ENCODE measurements at regions of chr3 and their contacts with region 1.

Region 1: GRCh38 chr3:194486540-194487288 is at the start of gene ATP13A3:
- DNase-seq: peak; percentile 96
- H3K4me3 Mint-ChIP-seq: peak within 1 kb of the TSS; percentile 94
- H3K27ac Mint-ChIP-seq: peak within 1 kb of the TSS; percentile 97
- H3K4me1 Mint-ChIP-seq: peaks cover 53% of the 10 kb centered on the region
- H3K27me3 Mint-ChIP-seq: no peaks in the 10 kb centered on the region
- total RNA-seq, gene ATP13A3: 181 and 193 TPM in 2 replicates

Region 2: GRCh38 chr3:193951859-193952258 is 534.9 kb before region 1 on chr3:
- intact Hi-C with region 1: no loop called
- DNase-seq: no peak
- H3K4me3 Mint-ChIP-seq: no peak overlapping the region
- H3K27ac Mint-ChIP-seq: no peak overlapping the region
- H3K4me1 Mint-ChIP-seq: no peaks in the 10 kb centered on the region
- H3K27me3 Mint-ChIP-seq: peaks cover 44% of the 10 kb centered on the region

Region 3: GRCh38 chr3:194431553-194431952 is 55.2 kb before region 1 on chr3:
- intact Hi-C with region 1: no loop called
- DNase-seq: no peak
- H3K4me3 Mint-ChIP-seq: no peak overlapping the region
- H3K27ac Mint-ChIP-seq: no peak overlapping the region
- H3K4me1 Mint-ChIP-seq: peaks cover 3% of the 10 kb centered on the region
- H3K27me3 Mint-ChIP-seq: no peaks in the 10 kb centered on the region

Region 4: DNA sequence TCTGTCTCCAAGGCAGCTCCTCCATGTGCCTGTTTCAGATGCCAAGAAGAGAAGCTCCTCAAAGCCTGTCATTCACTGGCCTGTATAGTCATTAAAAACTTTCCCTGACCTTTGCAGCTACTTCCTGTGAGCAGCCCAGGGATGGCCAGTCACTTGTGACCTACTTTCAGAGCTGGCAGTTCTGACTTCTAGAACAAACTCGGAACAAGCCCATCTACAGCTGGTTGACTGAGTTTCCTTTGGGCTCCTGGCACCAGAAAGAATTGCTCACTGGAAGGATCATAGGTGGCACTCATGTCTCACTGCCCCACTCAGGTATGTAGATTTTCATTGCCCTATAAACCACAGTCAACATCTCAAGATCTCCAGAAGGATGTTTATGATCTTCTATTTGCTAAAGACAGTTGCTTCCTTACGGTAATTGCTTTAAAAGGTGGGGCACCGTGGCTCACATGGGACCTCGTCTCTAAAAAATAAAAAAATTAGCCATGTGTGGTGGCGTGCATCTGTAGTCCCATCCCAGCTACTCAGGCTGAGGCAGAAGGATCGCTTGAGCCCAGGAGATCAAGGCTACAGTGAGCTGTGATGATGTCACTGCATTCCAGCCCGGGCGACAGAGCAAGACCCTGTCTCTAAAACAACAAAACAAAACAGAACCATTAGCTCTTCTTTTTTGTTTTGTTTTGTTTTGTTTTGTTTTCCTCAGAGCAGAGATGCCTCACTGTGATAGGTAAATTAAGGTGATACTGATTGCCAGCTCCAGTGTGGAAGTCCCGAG is 11.3 kb after region 1 on chr3:
- intact Hi-C with region 1: no loop called
- DNase-seq: no peak
- H3K4me3 Mint-ChIP-seq: no peak overlapping the region
- H3K27ac Mint-ChIP-seq: no peak overlapping the region
- H3K4me1 Mint-ChIP-seq: peaks cover 8% of the 10 kb centered on the region
- H3K27me3 Mint-ChIP-seq: no peaks in the 10 kb centered on the region

Region 5: DNA sequence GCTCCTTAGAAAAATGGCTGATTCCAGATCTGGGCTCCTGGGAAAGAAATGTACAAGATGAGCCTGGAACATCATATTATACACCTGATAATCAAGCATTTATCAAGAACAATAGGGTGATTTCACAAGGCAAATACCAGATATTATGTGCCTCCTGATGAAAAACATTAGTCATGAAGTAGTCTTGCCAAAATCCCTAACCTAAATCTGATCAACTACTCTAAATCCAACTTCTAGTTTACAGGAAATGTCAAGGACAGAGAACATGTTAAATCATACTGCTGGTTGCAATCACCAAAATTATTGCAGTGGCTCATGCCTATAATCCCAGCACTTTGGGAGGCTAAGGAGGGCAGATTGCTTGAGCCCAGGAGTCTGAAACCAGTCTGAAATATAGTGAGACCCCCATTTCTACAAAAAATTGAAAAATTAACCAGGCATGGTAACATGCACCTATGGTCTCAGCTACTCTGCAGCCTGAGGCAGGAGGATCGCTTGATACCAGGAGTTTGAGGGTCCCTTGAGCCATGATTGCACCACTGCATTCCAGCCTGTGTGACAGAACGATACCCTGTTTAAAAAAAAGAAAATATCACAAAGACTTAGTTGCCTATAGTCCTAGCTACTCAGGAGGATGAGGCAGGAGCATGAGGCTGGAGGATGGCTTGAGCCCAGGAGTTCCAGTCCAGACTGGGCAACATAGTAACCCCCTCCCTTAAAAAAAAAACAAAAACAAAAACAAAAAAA is 35.0 kb after region 1 on chr3:
- intact Hi-C with region 1: loop called (anchors 1 kb)
- DNase-seq: no peak
- H3K4me3 Mint-ChIP-seq: no peak overlapping the region
- H3K27ac Mint-ChIP-seq: no peak overlapping the region
- H3K4me1 Mint-ChIP-seq: peaks cover 25% of the 10 kb centered on the region
- H3K27me3 Mint-ChIP-seq: peaks cover 14% of the 10 kb centered on the region

Region 6: GRCh38 chr3:194583604-194584318 is 97.0 kb after region 1 on chr3:
- intact Hi-C with region 1: loop called (anchors 1 kb)
- DNase-seq: peak; percentile 99
- H3K4me3 Mint-ChIP-seq: peak overlapping the region; percentile 98
- H3K27ac Mint-ChIP-seq: peak overlapping the region; percentile 98
- H3K4me1 Mint-ChIP-seq: peaks cover 28% of the 10 kb centered on the region
- H3K27me3 Mint-ChIP-seq: peaks cover 1% of the 10 kb centered on the region

Region 7: DNA sequence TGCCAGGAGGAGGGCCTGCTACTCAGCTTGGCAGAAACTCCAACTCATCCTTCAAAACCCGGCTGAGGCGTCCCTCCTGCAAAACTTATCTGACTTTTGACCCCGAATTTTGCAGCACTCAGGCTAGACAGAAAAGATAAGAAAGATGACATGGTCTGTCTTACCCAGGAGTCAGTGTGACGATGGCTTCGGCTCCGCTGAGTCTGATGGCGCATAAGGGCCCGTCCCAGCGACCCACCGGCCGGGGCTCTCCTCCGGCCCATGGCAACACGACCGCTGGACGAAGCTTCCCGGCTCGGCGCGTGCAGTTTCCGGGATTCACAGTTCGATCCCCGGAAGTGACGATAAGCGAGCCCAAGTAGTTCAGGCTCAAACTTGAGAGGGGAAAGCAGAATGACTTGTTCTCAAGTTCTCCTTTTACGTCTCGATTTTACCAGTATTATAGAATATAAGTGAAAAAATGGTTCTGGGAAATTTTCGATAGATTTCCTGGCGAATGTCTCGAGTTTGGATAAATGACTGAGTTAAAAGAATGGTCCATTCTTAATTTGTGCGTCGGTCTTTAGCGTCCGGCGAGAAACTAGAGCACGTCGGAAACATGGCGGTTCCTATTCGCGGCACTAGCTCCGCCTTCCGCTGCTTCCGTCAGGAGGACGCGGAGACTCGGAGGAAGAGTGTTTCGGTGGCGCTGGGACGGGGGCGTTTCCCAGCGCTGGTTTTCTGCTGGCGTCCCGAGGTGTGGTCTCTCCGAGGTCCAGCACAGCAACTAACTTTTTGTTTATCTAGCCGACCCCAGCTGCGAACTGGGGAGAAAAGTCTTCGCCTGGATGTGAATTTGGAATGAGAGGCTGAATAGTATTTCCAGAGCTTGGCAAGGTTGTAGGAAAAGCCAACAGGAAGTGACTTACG is 185.4 kb after region 1 on chr3 and contains the start of gene LSG1:
- intact Hi-C with region 1: loop called (anchors 2 kb)
- DNase-seq: peak; percentile 97
- H3K4me3 Mint-ChIP-seq: peak within 1 kb of the TSS; percentile 99
- H3K27ac Mint-ChIP-seq: peak within 1 kb of the TSS; percentile 97
- H3K4me1 Mint-ChIP-seq: peaks cover 48% of the 10 kb centered on the region
- H3K27me3 Mint-ChIP-seq: no peaks in the 10 kb centered on the region
- total RNA-seq, gene LSG1: 59.0 and 60.2 TPM in 2 replicates

Region 8: GRCh38 chr3:194769020-194769643 is 282.4 kb after region 1 on chr3:
- intact Hi-C with region 1: loop called (anchors 1 kb)
- DNase-seq: peak; percentile 96
- H3K4me3 Mint-ChIP-seq: peak overlapping the region; percentile 80
- H3K27ac Mint-ChIP-seq: peak overlapping the region; percentile 83
- H3K4me1 Mint-ChIP-seq: peaks cover 10% of the 10 kb centered on the region
- H3K27me3 Mint-ChIP-seq: peaks cover 31% of the 10 kb centered on the region